ENCODE measurements at regions of chr9 and their contacts with region 1.

Region 1: GRCh38 chr9:72262063-72262462 is 102.9 kb downstream of the ZFAND5 start:
- DNase-seq: no peak
- H3K4me3 ChIP-seq: no peak overlapping the region
- H3K27ac ChIP-seq: no peak overlapping the region
- H3K4me1 ChIP-seq: no peaks in the 10 kb centered on the region
- H3K27me3 ChIP-seq: no peaks in the 10 kb centered on the region
- CTCF ChIP-seq: no peak
- POLR2A ChIP-seq: no peak

Region 2: GRCh38 chr9:72349240-72349639 is 87.2 kb after region 1 on chr9:
- intact Hi-C with region 1: no loop called
- DNase-seq: no peak
- H3K4me3 ChIP-seq: no peak overlapping the region
- H3K27ac ChIP-seq: no peak overlapping the region
- H3K4me1 ChIP-seq: no peaks in the 10 kb centered on the region
- H3K27me3 ChIP-seq: no peaks in the 10 kb centered on the region
- CTCF ChIP-seq: no peak
- POLR2A ChIP-seq: no peak

Region 3: GRCh38 chr9:72721067-72721466 is 459.0 kb after region 1 on chr9:
- intact Hi-C with region 1: loop called (anchors 5 kb)
- DNase-seq: no peak
- H3K4me3 ChIP-seq: no peak overlapping the region
- H3K27ac ChIP-seq: no peak overlapping the region
- H3K4me1 ChIP-seq: no peaks in the 10 kb centered on the region
- H3K27me3 ChIP-seq: no peaks in the 10 kb centered on the region
- CTCF ChIP-seq: no peak
- POLR2A ChIP-seq: no peak

Measured in vagina (tissue), 2 donors.